ENCODE measurements at regions of chr14 and their contacts with region 1.

Region 1: DNA sequence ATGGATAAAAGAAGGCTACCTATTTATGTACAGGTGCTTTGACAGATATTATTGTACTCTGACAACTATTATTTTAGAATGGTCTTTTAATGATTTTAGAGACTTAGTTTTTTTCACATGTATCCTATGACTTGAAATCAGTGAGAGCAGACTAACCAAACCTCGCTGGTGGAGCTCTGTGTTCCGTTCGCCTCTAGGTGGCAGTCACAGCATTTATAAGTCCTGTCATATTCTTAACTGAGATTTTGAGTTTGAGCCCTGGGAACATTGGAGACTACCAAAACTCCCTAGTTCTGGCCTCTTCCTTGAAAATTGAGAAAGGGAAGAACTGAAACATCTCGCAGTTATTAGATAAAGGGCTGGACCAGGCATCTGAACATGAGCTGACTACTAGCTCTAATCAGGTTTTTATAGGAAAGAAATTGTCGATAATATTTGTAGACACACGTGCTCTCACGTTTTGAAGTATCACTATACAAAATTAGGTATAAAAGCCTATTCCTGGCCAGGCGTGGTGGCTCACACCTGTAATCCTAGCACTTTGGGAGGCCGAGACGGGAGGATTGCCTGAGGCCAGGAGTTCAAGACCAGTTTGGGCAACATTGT is 48.3 kb downstream of the TTLL5 start:
- DNase-seq: peak; percentile 82

Region 2: GRCh38 chr14:75661495-75661794 is 47.9 kb before region 1 on chr14:
- in situ Hi-C with region 1: no loop called
- DNase-seq: no peak

Region 3: GRCh38 chr14:75982266-75983018 is 273.1 kb after region 1 on chr14:
- in situ Hi-C with region 1: loop called (anchors 25 kb)
- DNase-seq: peak; percentile 77